Activated CD4-positive, alpha-beta memory T cell treated with anti-CD3 and anti-CD28 coated beads for 36 hours (primary cell): ENCODE measurements at regions of chr3 and their contacts with region 1.

Region 1: GRCh38 chr3:4350789-4351163 is 47.6 kb downstream of the SETMAR start:
- DNase-seq: peak; percentile 53
- H3K4me3 Mint-ChIP-seq: peak overlapping the region; percentile 45
- H3K27ac Mint-ChIP-seq: peak overlapping the region; percentile 92
- H3K4me1 Mint-ChIP-seq: peaks cover 21% of the 10 kb centered on the region
- H3K27me3 Mint-ChIP-seq: no peaks in the 10 kb centered on the region

Region 2: DNA sequence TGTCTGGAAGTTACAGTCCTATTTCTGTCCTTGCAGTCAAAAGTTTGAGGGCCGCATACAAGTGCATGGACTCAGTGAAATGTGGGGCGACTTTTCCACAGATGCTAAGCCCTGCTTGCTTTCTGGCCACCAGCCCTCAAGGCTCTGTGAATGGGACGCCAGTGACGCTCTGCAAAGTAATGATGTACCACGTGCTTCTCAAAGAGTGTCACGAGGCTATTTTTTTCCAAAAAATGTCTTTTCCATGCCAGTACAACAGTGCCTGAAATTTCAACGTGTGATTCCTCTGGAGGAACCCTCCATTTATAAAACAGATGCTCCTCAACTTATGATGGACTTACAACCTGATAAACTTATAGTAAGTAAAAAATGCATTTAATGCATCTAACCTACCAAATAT is 889.5 kb before region 1 on chr3:
- CTCF ChIA-PET with region 1: no interaction called
- POLR2A ChIA-PET with region 1: no interaction called
- intact Hi-C with region 1: no loop called
- DNase-seq: no peak
- H3K4me3 Mint-ChIP-seq: no peak overlapping the region
- H3K27ac Mint-ChIP-seq: no peak overlapping the region
- H3K4me1 Mint-ChIP-seq: no peaks in the 10 kb centered on the region
- H3K27me3 Mint-ChIP-seq: no peaks in the 10 kb centered on the region

Region 3: GRCh38 chr3:4228295-4228694 is 122.5 kb before region 1 on chr3:
- CTCF ChIA-PET with region 1: no interaction called
- POLR2A ChIA-PET with region 1: no interaction called
- intact Hi-C with region 1: no loop called
- DNase-seq: no peak
- H3K4me3 Mint-ChIP-seq: no peak overlapping the region
- H3K27ac Mint-ChIP-seq: no peak overlapping the region
- H3K4me1 Mint-ChIP-seq: no peaks in the 10 kb centered on the region
- H3K27me3 Mint-ChIP-seq: no peaks in the 10 kb centered on the region

Region 4: DNA sequence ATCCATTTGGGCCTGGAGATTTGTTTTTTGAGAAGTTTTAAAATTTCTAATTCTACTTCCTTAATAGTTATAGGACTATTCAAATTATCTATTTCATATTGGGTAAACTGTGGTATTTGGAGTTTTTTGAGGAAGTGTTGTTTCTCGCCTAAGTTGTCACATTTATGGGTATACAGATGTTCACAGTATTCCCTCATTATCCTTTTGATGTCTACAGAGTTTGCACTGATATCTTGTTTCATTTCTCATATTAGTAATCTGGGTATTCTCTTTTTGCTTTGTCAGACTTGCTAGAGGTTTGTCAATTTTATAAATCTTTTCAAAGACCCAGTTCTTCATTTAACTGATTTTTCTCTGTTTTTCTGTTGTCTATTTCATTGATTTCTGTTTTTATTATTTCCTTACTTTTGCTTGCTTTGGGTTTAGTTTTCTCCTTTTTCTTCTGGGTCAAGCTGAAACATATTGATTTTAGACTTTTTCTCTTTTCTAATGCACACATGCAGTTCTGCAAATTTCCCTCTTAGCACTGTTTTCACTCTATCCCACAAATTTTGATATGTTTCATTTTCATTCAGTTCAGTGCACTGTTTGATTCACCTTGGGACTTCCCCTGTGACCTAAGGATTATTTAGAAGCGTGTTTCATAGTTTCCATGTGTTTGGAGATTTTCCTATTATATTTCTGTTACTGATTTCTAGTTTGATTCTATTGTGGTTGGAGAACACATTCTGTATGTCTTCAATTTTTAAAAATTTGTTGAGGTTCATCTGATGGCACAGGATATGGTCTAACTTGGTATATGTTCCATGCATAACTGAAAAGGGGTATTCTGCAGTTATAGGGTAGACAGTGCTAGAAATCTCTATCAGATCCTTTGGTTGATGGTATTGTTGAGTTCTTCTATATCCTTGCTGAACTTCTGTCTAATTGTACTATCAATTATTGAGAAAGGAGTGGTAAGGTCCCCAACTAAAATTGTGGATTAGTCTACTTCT is 36.7 kb after region 1 on chr3:
- CTCF ChIA-PET with region 1: interaction called, 7 read pairs
- POLR2A ChIA-PET with region 1: no interaction called
- intact Hi-C with region 1: loop called (anchors 1 kb)
- DNase-seq: no peak
- H3K4me3 Mint-ChIP-seq: no peak overlapping the region
- H3K27ac Mint-ChIP-seq: peak overlapping the region; percentile 47
- H3K4me1 Mint-ChIP-seq: peaks cover 32% of the 10 kb centered on the region
- H3K27me3 Mint-ChIP-seq: no peaks in the 10 kb centered on the region

Region 5: DNA sequence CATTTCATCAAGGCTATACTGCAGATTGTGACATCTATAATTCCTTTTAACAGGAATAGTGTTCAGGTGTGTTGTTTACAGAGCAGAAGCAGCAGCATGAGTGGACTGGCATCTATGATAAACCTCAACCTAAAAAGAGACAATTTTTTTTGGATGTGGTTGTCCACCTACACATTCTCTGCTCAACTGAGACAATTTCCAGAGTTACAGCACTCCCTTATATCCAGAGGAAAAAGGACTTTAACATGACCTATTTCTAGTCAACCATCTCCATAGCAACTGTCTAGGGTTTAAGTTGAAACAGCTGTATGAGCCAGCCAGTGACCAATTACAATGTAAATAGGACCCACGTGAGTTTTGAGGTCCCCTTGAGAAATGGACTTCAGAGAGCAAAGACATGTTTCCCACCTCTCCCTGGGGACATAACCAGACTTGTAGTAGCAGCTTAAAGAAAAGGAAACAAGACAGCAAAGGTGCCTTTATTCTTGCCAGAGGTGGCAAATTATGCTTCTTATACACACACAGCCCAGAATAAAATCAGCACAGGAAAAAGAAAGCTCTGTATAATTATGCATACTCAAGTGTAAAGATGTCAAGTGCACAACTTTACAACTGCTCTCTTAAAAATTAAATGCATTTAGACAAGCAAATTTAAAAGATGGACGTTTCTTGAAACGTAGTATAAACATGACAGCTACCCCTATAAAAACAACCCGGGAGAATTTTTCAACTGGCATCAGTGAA is 76.0 kb after region 1 on chr3:
- CTCF ChIA-PET with region 1: interaction called, 13 read pairs
- POLR2A ChIA-PET with region 1: interaction called, 3 read pairs
- intact Hi-C with region 1: loop called (anchors 1 kb)
- DNase-seq: no peak
- H3K4me3 Mint-ChIP-seq: no peak overlapping the region
- H3K27ac Mint-ChIP-seq: no peak overlapping the region
- H3K4me1 Mint-ChIP-seq: peaks cover 33% of the 10 kb centered on the region
- H3K27me3 Mint-ChIP-seq: no peaks in the 10 kb centered on the region

Region 6: DNA sequence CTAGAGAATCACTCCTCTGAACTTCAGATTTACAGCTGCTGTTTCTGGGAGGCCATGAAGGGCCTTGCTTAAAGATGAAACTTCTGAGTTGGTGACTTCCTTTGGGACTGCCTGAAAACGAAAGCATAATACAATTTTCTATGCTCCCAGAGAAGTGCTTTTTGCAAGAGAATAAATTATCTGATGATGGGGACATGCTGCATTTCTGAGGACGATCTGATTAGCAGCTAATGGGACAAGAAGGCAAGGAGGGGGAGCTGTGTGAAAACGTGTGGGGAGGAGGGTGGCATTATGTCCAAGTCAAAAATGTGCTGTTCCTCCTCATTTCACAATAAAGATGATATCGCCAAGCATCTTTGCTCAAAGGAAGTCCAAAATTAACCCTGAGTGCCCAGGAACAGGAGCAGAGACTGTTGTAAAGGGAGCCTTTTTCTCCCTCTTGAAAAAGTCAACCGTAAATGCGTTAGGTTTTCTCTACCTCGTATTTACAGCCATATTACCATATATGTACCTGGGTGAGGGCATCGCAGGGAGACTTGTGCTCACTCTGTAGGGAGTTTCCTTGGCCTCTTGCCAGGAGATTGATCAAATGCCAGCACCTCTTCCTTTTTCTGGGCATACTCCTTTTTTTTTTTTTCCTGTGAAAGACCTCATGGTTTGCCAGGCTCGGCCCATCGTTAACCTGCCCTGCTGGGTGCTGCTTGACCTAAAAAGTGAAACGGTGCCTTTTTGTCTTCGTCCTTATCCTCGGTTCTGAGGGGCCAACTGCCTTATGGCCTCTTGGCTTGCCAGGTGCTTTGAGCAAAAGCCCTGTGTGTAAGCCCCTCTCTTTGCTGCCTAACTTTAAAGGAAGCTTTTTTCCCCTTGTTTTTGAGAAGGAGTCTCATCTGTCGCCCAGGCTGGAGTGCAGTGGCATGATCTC is 153.8 kb after region 1 on chr3:
- CTCF ChIA-PET with region 1: interaction called, 13 read pairs
- POLR2A ChIA-PET with region 1: interaction called, 3 read pairs
- intact Hi-C with region 1: no loop called
- DNase-seq: peak; percentile 44
- H3K4me3 Mint-ChIP-seq: peak overlapping the region; percentile 75
- H3K27ac Mint-ChIP-seq: peak overlapping the region; percentile 84
- H3K4me1 Mint-ChIP-seq: peaks cover 50% of the 10 kb centered on the region
- H3K27me3 Mint-ChIP-seq: no peaks in the 10 kb centered on the region

Region 7: DNA sequence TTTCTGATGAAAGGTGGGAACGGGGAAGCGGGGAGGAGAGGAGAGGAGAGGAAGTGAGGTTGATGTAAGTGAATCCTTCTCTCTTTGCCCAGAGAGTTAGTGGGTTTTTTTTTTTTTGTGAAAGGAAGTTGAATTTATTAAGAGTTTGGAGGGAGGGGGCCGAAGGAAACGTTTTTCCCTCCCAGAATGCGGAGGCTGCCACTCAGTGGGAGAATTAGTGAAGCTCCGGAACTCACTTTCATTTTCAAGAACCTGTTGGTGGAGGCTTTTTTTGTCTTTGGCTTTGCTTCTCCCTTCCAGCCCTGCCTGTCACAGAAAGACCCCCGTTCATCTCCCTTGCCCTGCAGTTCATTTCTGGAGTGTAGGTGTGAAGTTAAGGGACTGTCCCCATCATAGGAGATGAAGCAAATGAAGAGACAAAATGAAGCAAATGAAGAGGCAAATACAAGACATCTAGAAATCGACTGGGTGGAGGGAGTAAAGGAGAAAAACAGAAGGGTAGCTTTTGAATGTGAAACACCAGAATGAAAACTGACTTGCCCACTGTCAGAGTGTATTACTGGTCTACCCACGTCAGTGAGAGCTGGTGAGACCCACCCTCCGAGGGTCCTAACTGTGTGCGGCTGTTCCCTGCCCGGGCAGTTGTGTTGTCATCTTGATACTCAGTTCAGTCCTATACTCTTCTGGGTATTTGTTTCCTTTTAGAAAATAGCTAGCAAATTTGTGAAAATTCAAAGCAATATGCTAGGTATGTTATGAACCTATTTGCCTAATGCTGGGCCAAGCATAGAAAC is 233.9 kb after region 1 on chr3:
- CTCF ChIA-PET with region 1: interaction called, 14 read pairs
- POLR2A ChIA-PET with region 1: no interaction called
- intact Hi-C with region 1: loop called (anchors 1 kb)
- DNase-seq: peak; percentile 48
- H3K4me3 Mint-ChIP-seq: peak overlapping the region; percentile 81
- H3K27ac Mint-ChIP-seq: peak overlapping the region; percentile 73
- H3K4me1 Mint-ChIP-seq: peaks cover 66% of the 10 kb centered on the region
- H3K27me3 Mint-ChIP-seq: no peaks in the 10 kb centered on the region

Region 8: GRCh38 chr3:4963669-4964589 is 613.2 kb after region 1 on chr3:
- CTCF ChIA-PET with region 1: no interaction called
- POLR2A ChIA-PET with region 1: no interaction called
- intact Hi-C with region 1: no loop called
- DNase-seq: no peak
- H3K4me3 Mint-ChIP-seq: no peak overlapping the region
- H3K27ac Mint-ChIP-seq: no peak overlapping the region
- H3K4me1 Mint-ChIP-seq: peaks cover 11% of the 10 kb centered on the region
- H3K27me3 Mint-ChIP-seq: no peaks in the 10 kb centered on the region

Region 9: GRCh38 chr3:5057857-5058324 is 707.1 kb after region 1 on chr3:
- CTCF ChIA-PET with region 1: no interaction called
- POLR2A ChIA-PET with region 1: no interaction called
- intact Hi-C with region 1: loop called (anchors 5 kb)
- DNase-seq: peak; percentile 87
- H3K4me3 Mint-ChIP-seq: no peak overlapping the region
- H3K27ac Mint-ChIP-seq: no peak overlapping the region
- H3K4me1 Mint-ChIP-seq: peaks cover 16% of the 10 kb centered on the region
- H3K27me3 Mint-ChIP-seq: peaks cover 8% of the 10 kb centered on the region

Region 10: GRCh38 chr3:5239602-5240001 is 888.8 kb after region 1 on chr3:
- CTCF ChIA-PET with region 1: no interaction called
- POLR2A ChIA-PET with region 1: no interaction called
- intact Hi-C with region 1: no loop called
- DNase-seq: no peak
- H3K4me3 Mint-ChIP-seq: no peak overlapping the region
- H3K27ac Mint-ChIP-seq: no peak overlapping the region
- H3K4me1 Mint-ChIP-seq: peaks cover 5% of the 10 kb centered on the region
- H3K27me3 Mint-ChIP-seq: no peaks in the 10 kb centered on the region